ENCODE measurements at regions of chr5 and their contacts with region 1.

Region 1: GRCh38 chr5:171630027-171630669 is 155.5 kb upstream of the SMIM23 start:
- DNase-seq: peak; percentile 61
- H3K4me3 ChIP-seq: peak overlapping the region in 2 of 3 experiments; percentile 14 to 36
- H3K27ac ChIP-seq: no peak overlapping the region
- H3K4me1 ChIP-seq: peaks cover 9% of the 10 kb centered on the region
- H3K27me3 ChIP-seq: peaks cover 4 to 20% of the 10 kb centered on the region in 2 experiments
- CTCF ChIP-seq: peak; percentile 55 to 74
- POLR2A ChIP-seq: no peak

Region 2: GRCh38 chr5:170722316-170722715 is 907.8 kb before region 1 on chr5:
- CTCF ChIA-PET with region 1: no interaction called
- POLR2A ChIA-PET with region 1: no interaction called
- dilution Hi-C with region 1: no loop called
- intact Hi-C with region 1: no loop called
- DNase-seq: no peak
- H3K4me3 ChIP-seq: no peak overlapping the region
- H3K27ac ChIP-seq: no peak overlapping the region
- H3K4me1 ChIP-seq: no peaks in the 10 kb centered on the region
- H3K27me3 ChIP-seq: peaks cover 2 to 3% of the 10 kb centered on the region in 2 experiments
- CTCF ChIP-seq: no peak
- POLR2A ChIP-seq: no peak

Region 3: GRCh38 chr5:171606414-171607024 is 23.6 kb before region 1 on chr5:
- CTCF ChIA-PET with region 1: interaction called, 11 read pairs
- POLR2A ChIA-PET with region 1: no interaction called
- dilution Hi-C with region 1: no loop called
- intact Hi-C with region 1: no loop called
- DNase-seq: no peak
- H3K4me3 ChIP-seq: no peak overlapping the region
- H3K27ac ChIP-seq: no peak overlapping the region
- H3K4me1 ChIP-seq: peaks cover under 1% of the 10 kb centered on the region
- H3K27me3 ChIP-seq: peaks cover 5 to 6% of the 10 kb centered on the region in 2 experiments
- CTCF ChIP-seq: peak; percentile 34 to 37
- POLR2A ChIP-seq: no peak

Region 4: GRCh38 chr5:171667341-171668096 is 37.4 kb after region 1 on chr5:
- CTCF ChIA-PET with region 1: interaction called, 7 read pairs
- POLR2A ChIA-PET with region 1: no interaction called
- dilution Hi-C with region 1: no loop called
- intact Hi-C with region 1: loop called (anchors 1 kb)
- DNase-seq: peak; percentile 88
- H3K4me3 ChIP-seq: no peak overlapping the region
- H3K27ac ChIP-seq: peak overlapping the region; percentile 78
- H3K4me1 ChIP-seq: peaks cover 12% of the 10 kb centered on the region
- H3K27me3 ChIP-seq: no peaks in the 10 kb centered on the region
- CTCF ChIP-seq: peak; percentile 12 to 22
- POLR2A ChIP-seq: no peak

Region 5: GRCh38 chr5:171858303-171858702 is 228.2 kb after region 1 on chr5:
- CTCF ChIA-PET with region 1: interaction called, 50 read pairs
- POLR2A ChIA-PET with region 1: no interaction called
- dilution Hi-C with region 1: no loop called
- intact Hi-C with region 1: loop called (anchors 1 kb)
- DNase-seq: no peak
- H3K4me3 ChIP-seq: no peak overlapping the region
- H3K27ac ChIP-seq: no peak overlapping the region
- H3K4me1 ChIP-seq: no peaks in the 10 kb centered on the region
- H3K27me3 ChIP-seq: no peaks in the 10 kb centered on the region
- CTCF ChIP-seq: peak; percentile 37 to 48
- POLR2A ChIP-seq: no peak

Region 6: GRCh38 chr5:172044631-172045314 is 414.6 kb after region 1 on chr5:
- CTCF ChIA-PET with region 1: no interaction called
- POLR2A ChIA-PET with region 1: no interaction called
- dilution Hi-C with region 1: no loop called
- intact Hi-C with region 1: loop called (anchors 10 kb)
- DNase-seq: no peak
- H3K4me3 ChIP-seq: no peak overlapping the region
- H3K27ac ChIP-seq: no peak overlapping the region
- H3K4me1 ChIP-seq: peaks cover 19% of the 10 kb centered on the region
- H3K27me3 ChIP-seq: no peaks in the 10 kb centered on the region
- CTCF ChIP-seq: no peak
- POLR2A ChIP-seq: no peak